Ascending aorta (tissue), 2 donors: ENCODE measurements at regions of chr7 and their contacts with region 1.

Region 1: GRCh38 chr7:137898839-137899721 is 52.3 kb upstream of the DGKI start:
- DNase-seq: peak; percentile 58 to 91
- H3K4me3 ChIP-seq: no peak overlapping the region
- H3K27ac ChIP-seq: peak overlapping the region; percentile 5 to 40
- H3K4me1 ChIP-seq: peaks cover 2 to 21% of the 10 kb centered on the region in 2 donors
- H3K27me3 ChIP-seq: no peaks in the 10 kb centered on the region
- CTCF ChIP-seq: peak; percentile 90 to 97 (median 96)

Region 2: GRCh38 chr7:137606061-137606674 is 292.9 kb before region 1 on chr7:
- intact Hi-C with region 1: loop called (anchors 1 kb)
- DNase-seq: no peak
- H3K4me3 ChIP-seq: no peak overlapping the region
- H3K27ac ChIP-seq: no peak overlapping the region
- H3K4me1 ChIP-seq: no peaks in the 10 kb centered on the region
- H3K27me3 ChIP-seq: no peaks in the 10 kb centered on the region
- CTCF ChIP-seq: peak in 2 of 3 experiments; percentile 40 to 62

Region 3: GRCh38 chr7:137656227-137656849 is 242.7 kb before region 1 on chr7:
- intact Hi-C with region 1: loop called (anchors 1 kb)
- DNase-seq: peak in 1 of 2 donors; percentile 90
- H3K4me3 ChIP-seq: no peak overlapping the region
- H3K27ac ChIP-seq: peak overlapping the region; percentile 47 to 60
- H3K4me1 ChIP-seq: peaks cover 5 to 9% of the 10 kb centered on the region in 2 donors
- H3K27me3 ChIP-seq: no peaks in the 10 kb centered on the region
- CTCF ChIP-seq: peak; percentile 57 to 89 (median 88)

Region 4: GRCh38 chr7:137816696-137817320 is 82.3 kb before region 1 on chr7:
- intact Hi-C with region 1: loop called (anchors 1 kb)
- DNase-seq: no peak
- H3K4me3 ChIP-seq: no peak overlapping the region
- H3K27ac ChIP-seq: no peak overlapping the region
- H3K4me1 ChIP-seq: peaks cover 0 to 16% of the 10 kb centered on the region in 2 donors
- H3K27me3 ChIP-seq: no peaks in the 10 kb centered on the region
- CTCF ChIP-seq: peak in 2 of 3 experiments; percentile 15 to 37

Region 5: GRCh38 chr7:137933270-137934017 is 34.4 kb after region 1 on chr7:
- intact Hi-C with region 1: loop called (anchors 2 kb)
- DNase-seq: peak in 1 of 2 donors; percentile 86
- H3K4me3 ChIP-seq: peak overlapping the region in 1 of 2 donors; percentile 11
- H3K27ac ChIP-seq: peak overlapping the region; percentile 77 to 79
- H3K4me1 ChIP-seq: peaks cover 13 to 62% of the 10 kb centered on the region in 2 donors
- H3K27me3 ChIP-seq: no peaks in the 10 kb centered on the region
- CTCF ChIP-seq: no peak

Region 6: DNA sequence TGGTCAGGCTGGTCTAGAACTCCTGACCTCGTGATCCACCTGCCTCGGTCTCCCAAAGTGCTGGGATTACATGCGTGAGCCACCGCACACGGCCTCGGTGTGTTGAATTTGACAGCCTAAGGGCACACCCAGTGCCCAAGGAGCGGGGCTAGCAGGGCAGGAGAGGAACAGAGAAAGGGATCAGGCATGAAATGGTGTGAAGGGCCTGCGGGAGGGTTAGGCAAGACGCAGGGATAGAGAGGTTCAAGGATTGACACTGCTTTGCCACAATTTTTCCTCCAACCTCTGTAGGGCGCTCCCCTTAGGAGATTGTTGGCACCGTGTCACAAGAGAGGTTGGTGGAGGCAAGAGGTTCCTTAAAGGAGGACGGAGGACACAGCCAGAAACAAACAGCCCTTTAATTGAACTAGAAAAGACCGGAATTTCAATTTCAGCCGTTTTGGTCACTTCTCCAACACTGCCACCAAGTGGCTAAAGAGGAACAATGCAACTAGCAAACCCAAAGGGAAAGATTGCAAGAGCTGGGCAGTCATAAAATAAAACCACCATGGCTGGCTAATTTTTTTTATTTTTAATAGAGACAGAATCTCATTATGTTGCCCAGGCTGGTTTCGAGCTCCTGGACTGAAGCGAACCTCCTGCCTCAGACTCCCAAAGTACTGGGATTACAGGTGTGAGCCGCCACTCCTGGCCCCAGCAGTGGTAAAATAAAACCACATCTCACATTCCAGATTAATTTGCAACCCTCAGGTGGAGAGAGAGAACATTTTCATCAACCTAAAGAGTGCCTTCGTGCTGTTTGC is 109.7 kb after region 1 on chr7:
- intact Hi-C with region 1: loop called (anchors 1 kb)
- DNase-seq: no peak
- H3K4me3 ChIP-seq: no peak overlapping the region
- H3K27ac ChIP-seq: no peak overlapping the region
- H3K4me1 ChIP-seq: no peaks in the 10 kb centered on the region
- H3K27me3 ChIP-seq: no peaks in the 10 kb centered on the region
- CTCF ChIP-seq: peak; percentile 80 to 92 (median 90)